H1 (cell line): ENCODE measurements at regions of chr4 and their contacts with region 1.

Region 1: GRCh38 chr4:57190601-57191481 is 80.7 kb upstream of the IGFBP7 start:
- DNase-seq: peak; percentile 57 to 88
- H3K4me3 ChIP-seq: peak overlapping the region in 1 of 4 experiments; percentile 10; a peak in 1 of 8 replicates
- H3K27ac ChIP-seq: no peak overlapping the region
- H3K4me1 ChIP-seq: peaks cover 12 to 42% (median 22%) of the 10 kb centered on the region in 4 experiments
- H3K27me3 ChIP-seq: peaks cover 2 to 20% (median 11%) of the 10 kb centered on the region in 4 experiments; a peak in 6 of 7 replicates
- CTCF ChIP-seq: peak; percentile 66 to 96 (median 79)
- EP300 ChIP-seq: no peak
- POLR2A ChIP-seq: no peak
- RAD21 ChIP-seq: peak; percentile 58 to 68

Region 2: DNA sequence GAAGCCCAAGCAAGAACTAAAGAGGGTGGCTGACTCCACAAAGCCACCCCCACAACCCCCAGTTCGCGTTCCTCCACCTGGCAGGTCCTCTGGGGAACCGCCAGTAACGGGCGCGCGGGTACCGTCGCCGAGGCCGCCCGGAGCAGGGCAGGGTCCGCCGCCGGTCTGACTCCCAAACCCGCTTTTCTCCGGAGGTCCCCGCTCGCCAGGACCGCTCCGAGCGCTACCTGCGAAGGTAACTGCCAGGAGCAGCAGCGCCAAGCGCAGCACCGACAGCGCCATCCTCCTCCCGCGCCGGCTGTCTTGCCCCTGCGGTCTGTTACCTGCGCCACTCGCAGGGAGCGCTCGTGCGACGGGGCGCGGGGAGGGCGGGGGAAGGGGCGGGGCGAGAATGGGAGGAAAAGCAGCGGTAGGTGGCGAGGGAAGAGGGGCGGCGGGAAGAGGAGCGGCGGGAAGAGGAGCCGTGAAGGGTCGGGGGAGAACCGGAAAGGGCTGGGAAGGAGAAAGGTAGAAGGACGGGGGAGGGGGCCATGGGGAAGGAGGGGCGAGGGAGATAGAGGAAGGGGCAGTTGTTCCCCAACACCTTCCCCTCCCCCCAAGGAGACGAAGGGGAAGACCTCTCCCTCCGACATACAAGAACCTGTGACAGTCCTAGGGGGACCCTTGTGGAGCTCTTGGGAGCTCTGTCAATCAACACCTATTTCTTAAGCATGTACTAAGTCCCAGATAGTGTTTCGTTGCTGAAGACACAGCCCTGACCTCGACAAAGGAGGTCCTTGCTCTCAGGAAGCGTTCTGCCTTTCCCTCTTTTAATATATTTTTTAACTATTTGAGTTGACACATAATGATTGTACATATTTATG is 369.2 kb before region 1 on chr4 and contains the start of gene SPINK2:
- CTCF ChIA-PET with region 1: no interaction called
- POLR2A ChIA-PET with region 1: no interaction called
- DNase-seq: peak; percentile 56 to 84
- H3K4me3 ChIP-seq: peak within 1 kb of the TSS; percentile 33 to 72 (median 48)
- H3K27ac ChIP-seq: no peak within 1 kb of the TSS
- H3K4me1 ChIP-seq: no peaks in the 10 kb centered on the region
- H3K27me3 ChIP-seq: peaks cover 8 to 16% (median 12%) of the 10 kb centered on the region in 4 experiments
- CTCF ChIP-seq: peak; percentile 31 to 59 (median 49)
- EP300 ChIP-seq: no peak
- POLR2A ChIP-seq: peak in 1 of 2 experiments; percentile 32; a peak in 1 of 3 replicates
- RAD21 ChIP-seq: no peak; a peak in 2 of 4 replicates
- total RNA-seq, gene SPINK2: 1.4 and 1.6 TPM in 2 replicates

Region 3: DNA sequence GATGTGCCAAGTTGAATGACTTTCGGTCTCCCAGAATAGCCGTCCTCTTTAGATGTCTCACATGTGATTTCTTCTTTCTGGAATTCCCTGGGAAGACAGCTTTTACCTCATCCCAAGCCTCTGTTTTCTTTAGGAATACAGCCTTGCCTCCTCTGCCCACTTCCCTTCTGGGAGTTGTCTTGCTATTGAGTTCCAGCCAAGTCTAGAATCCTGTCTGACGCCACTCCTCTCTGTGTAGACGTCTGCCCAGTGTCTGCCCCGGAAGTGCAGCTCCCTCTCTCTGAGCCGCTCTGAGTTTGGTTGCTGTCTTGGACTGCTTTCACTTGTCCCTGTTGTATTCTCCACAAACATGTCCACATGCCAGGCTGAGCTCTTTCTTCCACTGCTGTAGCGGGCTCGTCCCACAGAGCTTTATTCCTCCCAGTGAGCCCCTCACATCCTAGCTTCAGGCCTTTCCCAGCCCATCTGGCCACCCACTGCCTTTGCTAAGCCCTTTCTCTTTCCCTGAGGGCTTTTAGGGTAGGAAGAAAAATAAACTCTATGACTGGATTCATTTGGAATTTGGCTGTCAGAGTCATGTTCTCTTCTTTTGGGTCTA is 71.7 kb before region 1 on chr4:
- CTCF ChIA-PET with region 1: no interaction called
- POLR2A ChIA-PET with region 1: no interaction called
- DNase-seq: no peak
- H3K4me3 ChIP-seq: no peak overlapping the region
- H3K27ac ChIP-seq: no peak overlapping the region
- H3K4me1 ChIP-seq: no peaks in the 10 kb centered on the region
- H3K27me3 ChIP-seq: no peaks in the 10 kb centered on the region
- CTCF ChIP-seq: no peak
- EP300 ChIP-seq: no peak
- POLR2A ChIP-seq: no peak
- RAD21 ChIP-seq: no peak

Region 4: DNA sequence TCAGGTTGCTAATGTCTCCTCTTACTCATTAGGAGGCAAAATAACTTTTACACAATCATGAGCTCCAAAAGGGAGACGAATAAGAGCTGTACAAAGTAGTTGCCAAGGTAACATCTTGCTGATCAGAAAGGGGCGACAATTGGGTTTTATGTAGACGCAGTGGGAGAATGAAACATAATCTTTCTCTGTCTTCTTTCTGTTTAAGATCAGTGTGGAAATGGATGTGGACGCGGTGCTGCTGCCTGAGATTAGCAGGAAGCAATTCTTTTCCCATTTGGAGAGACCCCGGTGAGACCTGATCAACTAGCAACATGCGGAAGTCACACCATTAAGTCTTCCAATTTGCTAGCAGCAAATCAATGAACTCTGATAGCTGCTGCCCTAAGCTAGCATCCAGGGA is 10.1 kb after region 1 on chr4:
- CTCF ChIA-PET with region 1: interaction called, 21 read pairs
- POLR2A ChIA-PET with region 1: interaction called, 3 read pairs
- DNase-seq: no peak
- H3K4me3 ChIP-seq: no peak overlapping the region
- H3K27ac ChIP-seq: no peak overlapping the region
- H3K4me1 ChIP-seq: peaks cover 0 to 4% (median under 1%) of the 10 kb centered on the region in 4 experiments; a peak in 1 of 7 replicates
- H3K27me3 ChIP-seq: 0 out of 7 replicates have a peak, but pooled peaks cover 0 to under 1% (median 0%) of the 10 kb centered on the region in 4 experiments
- CTCF ChIP-seq: no peak
- EP300 ChIP-seq: no peak
- POLR2A ChIP-seq: no peak
- RAD21 ChIP-seq: no peak

Region 5: DNA sequence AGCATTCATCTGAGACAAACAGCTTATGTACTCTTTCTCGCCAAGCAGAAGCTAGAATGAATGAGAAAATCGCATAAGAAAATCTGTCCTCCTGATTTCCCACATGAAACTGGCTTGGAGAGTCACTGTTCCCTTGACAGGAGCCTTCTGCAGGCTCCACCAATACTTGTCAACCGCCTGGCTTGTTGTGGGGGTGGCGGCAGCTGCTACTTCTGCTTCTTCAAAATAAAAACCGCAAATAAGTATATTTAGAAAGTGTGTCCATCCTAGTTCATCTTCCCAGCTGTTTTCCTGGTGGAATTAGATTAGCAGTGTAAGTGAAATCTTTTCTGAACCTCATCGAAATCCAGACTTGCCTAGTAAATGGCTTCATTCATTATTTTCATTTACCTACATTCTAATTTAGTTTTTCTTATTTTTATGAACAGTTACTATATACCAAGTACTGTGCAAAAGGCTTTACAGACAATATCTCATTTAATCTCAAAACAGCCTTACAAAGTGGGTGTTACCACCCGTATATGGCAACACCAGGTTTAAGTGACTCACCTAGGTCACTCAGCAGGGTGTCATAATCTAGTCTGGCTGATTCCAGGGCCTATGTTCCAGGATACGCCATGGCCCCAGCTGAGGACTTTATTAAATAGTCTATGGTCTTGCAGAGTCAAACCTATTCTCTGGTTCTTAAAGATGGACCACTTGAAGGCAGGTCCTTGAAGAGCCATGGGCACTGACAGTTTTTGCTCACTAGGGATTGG is 24.0 kb after region 1 on chr4:
- CTCF ChIA-PET with region 1: interaction called, 38 read pairs
- POLR2A ChIA-PET with region 1: no interaction called
- DNase-seq: no peak
- H3K4me3 ChIP-seq: no peak overlapping the region
- H3K27ac ChIP-seq: no peak overlapping the region
- H3K4me1 ChIP-seq: peaks cover 0 to 3% (median 1%) of the 10 kb centered on the region in 4 experiments; a peak in 1 of 7 replicates
- H3K27me3 ChIP-seq: no peaks in the 10 kb centered on the region
- CTCF ChIP-seq: no peak
- EP300 ChIP-seq: no peak
- POLR2A ChIP-seq: no peak
- RAD21 ChIP-seq: no peak

Region 6: DNA sequence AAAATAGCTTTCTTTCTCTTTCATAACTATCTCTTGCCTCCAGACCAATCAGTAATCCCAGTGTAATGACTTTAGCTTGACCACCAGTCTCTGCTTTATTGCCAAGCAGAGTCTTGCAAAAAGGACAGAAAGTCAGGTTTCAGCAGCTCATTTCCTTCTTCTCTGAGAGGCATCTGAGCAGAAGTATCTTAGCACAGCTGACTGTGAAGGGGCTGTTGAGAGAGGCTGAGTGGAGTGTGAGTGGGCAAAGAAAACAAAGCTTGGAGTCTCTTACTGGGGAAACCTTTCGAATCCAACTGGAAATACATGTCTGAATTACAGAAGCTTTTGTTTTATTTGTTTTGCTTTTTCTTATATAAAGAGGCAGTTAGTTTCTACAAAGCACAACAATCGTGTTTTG is 89.6 kb after region 1 on chr4:
- CTCF ChIA-PET with region 1: interaction called, 12 read pairs
- POLR2A ChIA-PET with region 1: no interaction called
- DNase-seq: no peak
- H3K4me3 ChIP-seq: no peak overlapping the region
- H3K27ac ChIP-seq: no peak overlapping the region
- H3K4me1 ChIP-seq: peaks cover 0 to 5% (median 2%) of the 10 kb centered on the region in 4 experiments; a peak in 2 of 7 replicates
- H3K27me3 ChIP-seq: no peaks in the 10 kb centered on the region; a peak in 1 of 7 replicates
- CTCF ChIP-seq: no peak
- EP300 ChIP-seq: no peak
- POLR2A ChIP-seq: no peak
- RAD21 ChIP-seq: no peak

Region 7: GRCh38 chr4:57329279-57329678 is 138.4 kb after region 1 on chr4:
- CTCF ChIA-PET with region 1: no interaction called
- POLR2A ChIA-PET with region 1: no interaction called
- DNase-seq: no peak
- H3K4me3 ChIP-seq: no peak overlapping the region
- H3K27ac ChIP-seq: no peak overlapping the region
- H3K4me1 ChIP-seq: 0 out of 7 replicates have a peak, but pooled peaks cover 0 to 2% (median 0%) of the 10 kb centered on the region in 4 experiments
- H3K27me3 ChIP-seq: no peaks in the 10 kb centered on the region
- CTCF ChIP-seq: no peak
- EP300 ChIP-seq: no peak
- POLR2A ChIP-seq: no peak
- RAD21 ChIP-seq: no peak

Region 8: DNA sequence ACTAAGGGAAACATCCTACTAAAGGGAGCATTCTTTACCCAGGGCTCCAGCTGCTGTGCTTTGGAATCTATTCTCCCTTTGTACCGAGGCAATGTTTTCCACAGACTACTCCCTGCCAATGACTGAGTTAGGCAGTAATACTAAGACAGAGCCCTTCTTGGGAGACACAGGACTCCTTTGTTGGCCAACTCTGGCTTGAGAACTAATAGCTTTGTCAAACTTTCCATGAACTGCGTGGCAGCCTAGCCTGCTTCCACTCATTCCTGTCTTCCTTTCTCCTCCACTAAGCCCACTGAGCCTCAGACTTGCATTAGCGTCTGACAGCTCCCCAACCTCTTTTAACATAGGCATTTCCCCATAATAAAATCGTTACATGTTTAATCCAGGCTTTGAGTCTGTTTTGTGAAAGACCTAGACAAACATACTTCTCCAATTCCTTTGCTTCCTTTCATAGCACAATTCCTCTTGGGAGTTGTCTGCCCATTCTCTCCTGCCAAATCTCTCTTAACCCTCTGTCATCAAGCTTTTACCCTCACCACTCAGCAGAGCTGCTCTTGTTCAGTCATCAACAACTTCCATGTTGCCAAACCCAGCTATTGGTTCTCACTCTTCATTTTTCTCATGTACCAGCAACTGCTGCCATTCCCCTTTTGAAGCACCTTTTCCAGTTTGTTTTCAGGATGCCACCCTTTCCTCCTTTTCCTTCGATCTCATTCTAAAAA is 219.7 kb after region 1 on chr4:
- CTCF ChIA-PET with region 1: interaction called, 10 read pairs
- POLR2A ChIA-PET with region 1: no interaction called
- DNase-seq: no peak
- H3K4me3 ChIP-seq: no peak overlapping the region
- H3K27ac ChIP-seq: no peak overlapping the region
- H3K4me1 ChIP-seq: no peaks in the 10 kb centered on the region
- H3K27me3 ChIP-seq: no peaks in the 10 kb centered on the region
- CTCF ChIP-seq: no peak
- EP300 ChIP-seq: no peak
- POLR2A ChIP-seq: no peak
- RAD21 ChIP-seq: no peak

Region 9: DNA sequence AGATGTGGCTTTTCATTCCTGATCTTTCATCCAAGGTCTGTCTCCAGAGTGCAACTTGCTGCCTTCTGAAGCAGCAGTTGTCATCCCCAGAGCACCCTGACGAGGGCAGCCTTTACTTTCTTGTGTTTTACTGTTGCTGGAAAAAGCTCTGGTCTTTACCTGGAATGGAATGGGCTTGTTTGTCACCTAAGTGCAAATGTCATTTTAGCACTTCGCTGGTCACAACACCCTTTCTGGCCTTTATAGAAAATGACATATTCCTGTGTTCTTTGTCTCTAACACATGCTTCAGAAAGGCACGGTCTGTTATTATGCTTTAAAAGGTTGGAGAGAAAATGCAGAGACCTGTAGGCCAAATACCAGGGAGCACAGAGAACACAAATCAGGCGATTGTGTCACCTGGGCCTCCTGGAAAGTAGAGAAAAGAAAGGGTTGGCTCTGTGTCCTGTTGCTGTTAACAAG is 252.0 kb after region 1 on chr4:
- CTCF ChIA-PET with region 1: interaction called, 11 read pairs
- POLR2A ChIA-PET with region 1: no interaction called
- DNase-seq: peak; percentile 39 to 80
- H3K4me3 ChIP-seq: no peak overlapping the region
- H3K27ac ChIP-seq: no peak overlapping the region
- H3K4me1 ChIP-seq: no peaks in the 10 kb centered on the region
- H3K27me3 ChIP-seq: no peaks in the 10 kb centered on the region
- CTCF ChIP-seq: peak; percentile 76 to 94 (median 77)
- EP300 ChIP-seq: no peak
- POLR2A ChIP-seq: no peak
- RAD21 ChIP-seq: peak; percentile 98